Prostate gland (tissue), 2 donors: ENCODE measurements at regions of chr6 and their contacts with region 1.

Region 1: DNA sequence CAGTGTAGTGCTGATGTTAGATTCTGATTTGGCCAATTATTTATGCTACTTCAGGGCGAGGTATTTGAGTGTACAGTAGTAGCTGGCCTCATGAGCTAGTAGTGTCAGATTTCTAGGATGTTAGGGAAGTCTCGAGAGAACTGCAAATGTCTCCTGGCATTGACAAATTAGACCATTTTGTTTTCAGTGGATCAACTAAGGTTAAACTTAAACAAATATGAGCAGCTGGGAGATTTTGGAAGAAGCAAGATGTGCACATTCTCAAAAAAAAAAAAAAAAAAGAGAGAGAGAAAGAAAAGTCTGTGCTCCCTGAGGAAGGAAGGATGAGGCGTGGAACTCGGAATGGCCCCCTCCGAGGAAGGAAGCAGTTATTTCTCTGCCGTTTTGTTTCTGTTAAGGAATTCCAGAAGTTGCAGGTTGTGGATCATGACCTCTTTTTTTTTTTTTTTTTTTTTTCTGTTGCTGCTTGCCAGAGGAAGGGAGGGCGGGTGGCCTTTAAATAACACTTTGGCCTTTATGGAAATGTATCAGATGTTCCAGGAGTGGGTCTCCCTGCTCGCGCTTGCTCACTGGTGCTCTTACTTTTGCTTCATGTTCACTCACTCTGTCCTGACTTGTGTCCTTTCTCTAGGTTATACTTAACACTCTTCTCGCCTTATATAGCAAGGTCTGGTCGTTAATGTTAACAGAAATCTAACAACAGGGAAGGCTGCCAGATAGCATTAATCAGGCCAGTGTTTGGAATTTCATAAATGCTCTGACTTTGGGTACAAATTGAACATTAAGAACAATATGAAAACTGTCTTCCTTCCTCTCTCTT is 124.4 kb downstream of the TCP11 start:
- DNase-seq: no peak
- H3K4me3 ChIP-seq: peak overlapping the region; percentile 24 to 25
- H3K27ac ChIP-seq: peak overlapping the region; percentile 69 to 73
- H3K4me1 ChIP-seq: no peaks in the 10 kb centered on the region
- H3K27me3 ChIP-seq: no peaks in the 10 kb centered on the region
- CTCF ChIP-seq: no peak
- POLR2A ChIP-seq: no peak

Region 2: GRCh38 chr6:35057449-35058357 is 41.0 kb after region 1 on chr6:
- intact Hi-C with region 1: loop called (anchors 5 kb)
- DNase-seq: no peak
- H3K4me3 ChIP-seq: no peak overlapping the region
- H3K27ac ChIP-seq: no peak overlapping the region
- H3K4me1 ChIP-seq: no peaks in the 10 kb centered on the region
- H3K27me3 ChIP-seq: no peaks in the 10 kb centered on the region
- CTCF ChIP-seq: no peak
- POLR2A ChIP-seq: no peak